ENCODE measurements at regions of chr14 and their contacts with region 1.

Region 1: DNA sequence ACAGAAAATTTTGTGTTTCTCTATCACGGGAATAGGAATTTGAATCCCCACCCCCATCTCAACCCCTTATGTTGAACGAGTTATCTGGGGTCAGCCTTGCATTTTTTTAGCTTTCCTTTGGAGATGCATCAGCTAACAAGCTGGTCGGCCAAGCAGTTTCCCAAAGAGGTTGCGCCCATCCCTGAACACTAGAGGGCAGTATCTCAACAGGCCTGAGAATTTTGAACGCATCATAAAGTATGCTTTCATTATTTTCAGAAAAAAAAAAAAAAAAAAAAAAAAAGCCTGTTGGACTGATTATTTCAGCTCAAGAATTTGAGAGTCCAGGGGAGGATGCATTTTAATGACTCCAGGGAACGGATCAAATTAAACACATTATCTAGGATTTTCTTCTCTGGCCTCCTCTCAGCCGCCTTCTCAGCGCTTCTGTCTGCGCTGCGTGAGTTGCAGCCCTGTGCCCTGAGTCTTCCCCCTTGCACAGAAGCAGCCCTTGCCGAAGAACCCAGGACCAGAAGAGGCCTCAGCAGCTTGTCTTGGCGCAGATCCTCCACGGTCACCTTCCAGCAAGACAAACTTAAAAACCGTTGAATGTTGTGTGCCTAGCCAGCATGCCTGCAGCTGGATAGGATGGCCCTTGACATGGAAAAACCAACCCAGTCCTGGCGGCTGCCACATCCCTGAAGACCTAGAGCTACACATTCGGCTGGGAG is 76.6 kb upstream of the GZMB start:
- DNase-seq: peak; percentile 69
- H3K4me3 Mint-ChIP-seq: no peak overlapping the region
- H3K27ac Mint-ChIP-seq: no peak overlapping the region
- H3K4me1 Mint-ChIP-seq: peaks cover 4% of the 10 kb centered on the region
- H3K27me3 Mint-ChIP-seq: peaks cover 6% of the 10 kb centered on the region

Region 2: GRCh38 chr14:24678801-24679247 is 31.7 kb before region 1 on chr14:
- CTCF ChIA-PET with region 1: interaction called, 19 read pairs
- POLR2A ChIA-PET with region 1: no interaction called
- intact Hi-C with region 1: no loop called
- DNase-seq: peak; percentile 81
- H3K4me3 Mint-ChIP-seq: peak overlapping the region; percentile 63
- H3K27ac Mint-ChIP-seq: peak overlapping the region; percentile 72
- H3K4me1 Mint-ChIP-seq: peaks cover 50% of the 10 kb centered on the region
- H3K27me3 Mint-ChIP-seq: no peaks in the 10 kb centered on the region

Region 3: DNA sequence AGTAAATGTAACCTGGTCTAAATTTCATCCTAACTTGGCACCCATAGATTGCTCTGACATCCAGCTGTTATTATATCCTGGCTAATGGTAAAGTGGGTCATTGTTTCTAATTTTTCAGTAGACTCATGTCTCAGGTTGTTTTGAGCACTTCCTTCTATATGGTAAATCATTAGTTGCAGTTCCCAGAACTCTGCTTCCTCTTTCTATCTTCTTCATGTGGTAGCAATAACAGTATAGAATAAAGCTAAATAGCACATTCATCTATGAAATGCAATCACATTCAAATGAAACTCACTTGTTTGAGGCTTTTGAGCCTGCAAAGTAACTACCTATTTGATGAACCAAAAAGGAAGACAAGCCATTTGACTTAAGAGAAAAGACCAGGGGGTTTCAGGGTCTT is 11.5 kb before region 1 on chr14:
- CTCF ChIA-PET with region 1: interaction called, 30 read pairs
- POLR2A ChIA-PET with region 1: interaction called, 4 read pairs
- intact Hi-C with region 1: no loop called
- DNase-seq: no peak
- H3K4me3 Mint-ChIP-seq: no peak overlapping the region
- H3K27ac Mint-ChIP-seq: no peak overlapping the region
- H3K4me1 Mint-ChIP-seq: peaks cover 5% of the 10 kb centered on the region
- H3K27me3 Mint-ChIP-seq: peaks cover 4% of the 10 kb centered on the region

Region 4: GRCh38 chr14:24734878-24735500 is 24.4 kb after region 1 on chr14:
- CTCF ChIA-PET with region 1: interaction called, 12 read pairs
- POLR2A ChIA-PET with region 1: no interaction called
- intact Hi-C with region 1: no loop called
- DNase-seq: peak; percentile 17
- H3K4me3 Mint-ChIP-seq: no peak overlapping the region
- H3K27ac Mint-ChIP-seq: no peak overlapping the region
- H3K4me1 Mint-ChIP-seq: no peaks in the 10 kb centered on the region
- H3K27me3 Mint-ChIP-seq: no peaks in the 10 kb centered on the region

Region 5: DNA sequence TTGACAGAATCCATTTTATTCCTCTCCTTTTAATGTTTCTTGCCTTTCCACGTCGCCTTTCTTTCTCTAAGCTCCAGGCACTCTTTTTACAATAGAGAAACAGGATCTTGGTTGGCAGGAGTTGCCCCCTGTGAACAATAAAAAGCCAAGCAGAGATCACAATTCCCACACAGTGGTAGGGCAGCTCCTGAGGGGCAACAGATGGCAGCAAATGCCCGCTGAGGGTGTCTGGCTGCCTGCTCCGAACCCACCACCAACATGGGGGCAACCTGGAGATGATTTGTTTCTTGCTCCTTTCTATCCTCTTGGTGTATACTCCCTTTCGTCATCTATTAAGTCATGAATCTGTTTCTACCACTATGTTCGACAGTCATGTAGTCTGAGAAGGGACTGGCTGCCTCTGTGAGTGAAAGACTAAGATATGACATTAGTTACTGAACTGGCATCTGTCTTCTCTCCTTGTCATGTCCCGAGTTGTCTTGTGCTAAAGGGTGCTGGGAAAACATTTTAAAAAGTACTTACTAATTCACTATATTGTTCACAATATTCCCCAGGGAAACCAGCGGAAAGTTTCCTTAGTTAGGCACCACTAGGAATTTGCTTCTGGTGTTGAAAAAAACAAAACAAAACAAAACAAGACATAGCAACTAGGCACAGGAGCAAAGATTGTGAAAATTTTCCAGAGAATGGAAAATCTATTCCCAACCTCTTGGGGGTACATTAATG is 169.3 kb after region 1 on chr14:
- CTCF ChIA-PET with region 1: no interaction called
- POLR2A ChIA-PET with region 1: no interaction called
- intact Hi-C with region 1: no loop called
- DNase-seq: no peak
- H3K4me3 Mint-ChIP-seq: no peak overlapping the region
- H3K27ac Mint-ChIP-seq: no peak overlapping the region
- H3K4me1 Mint-ChIP-seq: no peaks in the 10 kb centered on the region
- H3K27me3 Mint-ChIP-seq: peaks cover 5% of the 10 kb centered on the region

Region 6: GRCh38 chr14:25132732-25133422 is 422.3 kb after region 1 on chr14:
- CTCF ChIA-PET with region 1: interaction called, 64 read pairs
- POLR2A ChIA-PET with region 1: no interaction called
- intact Hi-C with region 1: loop called (anchors 1 kb)
- DNase-seq: peak; percentile 54
- H3K4me3 Mint-ChIP-seq: no peak overlapping the region
- H3K27ac Mint-ChIP-seq: no peak overlapping the region
- H3K4me1 Mint-ChIP-seq: peaks cover 3% of the 10 kb centered on the region
- H3K27me3 Mint-ChIP-seq: peaks cover 28% of the 10 kb centered on the region

Measured in activated CD4-positive, alpha-beta memory T cell treated with anti-CD3 and anti-CD28 coated beads for 36 hours (primary cell).